MCF 10A (cell line): ENCODE measurements at regions of chr22 and their contacts with region 1.

Region 1: DNA sequence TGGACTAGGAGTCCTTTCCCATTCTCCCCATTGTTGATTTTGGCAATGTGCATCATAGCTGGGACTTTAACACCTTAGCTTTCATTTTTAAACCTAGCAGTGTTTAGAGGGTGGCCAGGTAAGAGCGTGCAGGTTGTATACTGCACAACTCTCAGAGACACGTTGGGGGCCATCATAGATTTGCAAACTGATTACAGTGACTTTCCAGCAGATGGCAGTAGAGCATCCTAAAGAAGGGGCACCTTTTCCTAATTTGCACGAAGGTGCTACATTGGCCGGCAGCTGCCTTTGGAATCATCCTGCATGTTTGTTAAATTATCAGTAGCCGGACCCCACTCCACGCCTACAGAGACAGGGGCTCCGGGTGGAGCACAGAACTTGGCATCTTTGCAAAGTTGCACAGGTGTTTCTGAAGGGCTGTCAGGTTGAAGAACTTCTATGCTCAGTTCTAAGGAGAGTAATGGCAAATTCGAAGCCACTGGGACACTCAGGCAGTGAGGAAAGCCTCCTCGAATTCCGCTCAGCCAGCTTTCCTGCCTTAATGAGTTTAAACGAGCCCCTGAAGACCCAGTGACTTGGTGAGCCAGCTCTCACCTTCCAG is 7.7 kb downstream of the LHFPL7 start:
- DNase-seq: peak; percentile 73
- H3K4me3 Mint-ChIP-seq: no peak overlapping the region
- H3K27ac Mint-ChIP-seq: no peak overlapping the region
- H3K4me1 Mint-ChIP-seq: peaks cover 6% of the 10 kb centered on the region
- H3K27me3 Mint-ChIP-seq: no peaks in the 10 kb centered on the region
- CTCF ChIP-seq: peak; percentile 82

Region 2: DNA sequence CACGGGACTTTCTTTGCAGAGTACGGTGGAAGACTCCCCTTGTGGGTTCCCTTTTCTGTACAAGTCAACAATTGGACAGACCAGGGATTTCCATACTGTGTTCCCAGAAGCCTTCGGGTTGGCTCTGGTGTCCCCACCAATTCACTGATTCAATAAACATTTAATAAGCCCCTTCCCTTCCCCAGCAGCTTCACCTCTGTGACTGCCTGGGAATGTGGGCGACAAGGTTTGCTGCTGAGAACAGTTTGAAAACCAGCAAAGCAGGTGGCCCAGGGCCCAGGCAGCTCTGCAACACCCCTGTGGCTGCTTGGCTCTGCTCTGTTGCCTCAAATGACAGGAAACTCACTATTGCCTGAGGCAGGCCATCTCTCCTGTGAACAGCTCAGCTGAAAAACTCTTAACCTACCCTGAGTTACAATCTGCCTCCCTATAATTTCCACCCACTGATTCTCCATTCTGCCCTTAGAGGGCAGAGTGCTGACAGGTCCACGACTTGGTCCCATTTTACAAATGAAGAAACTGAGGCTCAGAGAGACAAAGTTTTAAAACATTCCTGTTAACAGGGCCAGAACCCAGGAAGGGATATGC is 501.0 kb before region 1 on chr22:
- CTCF ChIA-PET with region 1: no interaction called
- POLR2A ChIA-PET with region 1: no interaction called
- intact Hi-C with region 1: no loop called
- DNase-seq: peak; percentile 20
- H3K4me3 Mint-ChIP-seq: no peak overlapping the region
- H3K27ac Mint-ChIP-seq: no peak overlapping the region
- H3K4me1 Mint-ChIP-seq: no peaks in the 10 kb centered on the region
- H3K27me3 Mint-ChIP-seq: no peaks in the 10 kb centered on the region
- CTCF ChIP-seq: peak; percentile 16

Region 3: GRCh38 chr22:24926849-24927579 is 11.8 kb before region 1 on chr22:
- CTCF ChIA-PET with region 1: interaction called, 19 read pairs
- POLR2A ChIA-PET with region 1: no interaction called
- intact Hi-C with region 1: no loop called
- DNase-seq: peak; percentile 76
- H3K4me3 Mint-ChIP-seq: no peak overlapping the region
- H3K27ac Mint-ChIP-seq: no peak overlapping the region
- H3K4me1 Mint-ChIP-seq: peaks cover 6% of the 10 kb centered on the region
- H3K27me3 Mint-ChIP-seq: peaks cover 33% of the 10 kb centered on the region
- CTCF ChIP-seq: no peak

Region 4: GRCh38 chr22:25002241-25002985 is 63.6 kb after region 1 on chr22:
- CTCF ChIA-PET with region 1: no interaction called
- POLR2A ChIA-PET with region 1: no interaction called
- intact Hi-C with region 1: no loop called
- DNase-seq: no peak
- H3K4me3 Mint-ChIP-seq: no peak overlapping the region
- H3K27ac Mint-ChIP-seq: no peak overlapping the region
- H3K4me1 Mint-ChIP-seq: peaks cover 17% of the 10 kb centered on the region
- H3K27me3 Mint-ChIP-seq: no peaks in the 10 kb centered on the region
- CTCF ChIP-seq: no peak

Region 5: GRCh38 chr22:25027959-25028840 is 89.4 kb after region 1 on chr22:
- CTCF ChIA-PET with region 1: interaction called, 13 read pairs
- POLR2A ChIA-PET with region 1: no interaction called
- intact Hi-C with region 1: no loop called
- DNase-seq: no peak
- H3K4me3 Mint-ChIP-seq: no peak overlapping the region
- H3K27ac Mint-ChIP-seq: peak overlapping the region; percentile 79
- H3K4me1 Mint-ChIP-seq: peaks cover 28% of the 10 kb centered on the region
- H3K27me3 Mint-ChIP-seq: no peaks in the 10 kb centered on the region
- CTCF ChIP-seq: peak; percentile 28

Region 6: DNA sequence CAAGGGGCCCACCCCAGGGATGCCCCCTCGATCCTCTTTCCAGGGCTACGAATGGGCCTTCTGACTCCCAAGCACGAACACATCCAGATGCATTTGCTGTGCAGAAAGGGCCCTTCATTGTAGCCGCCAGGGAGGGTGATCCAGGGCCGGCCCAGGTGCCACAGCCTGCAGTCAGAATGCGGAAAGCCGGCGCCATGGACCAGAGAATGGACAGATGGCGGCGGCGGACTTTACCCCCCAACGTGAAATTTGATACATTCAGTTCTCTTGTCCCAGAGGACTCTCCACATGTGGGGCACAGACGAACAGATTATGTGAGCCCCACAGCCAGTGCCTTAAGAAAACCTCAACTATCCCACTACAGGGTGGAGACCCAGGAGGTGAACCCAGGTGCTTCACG is 100.9 kb after region 1 on chr22:
- CTCF ChIA-PET with region 1: interaction called, 10 read pairs
- POLR2A ChIA-PET with region 1: no interaction called
- intact Hi-C with region 1: no loop called
- DNase-seq: no peak
- H3K4me3 Mint-ChIP-seq: no peak overlapping the region
- H3K27ac Mint-ChIP-seq: no peak overlapping the region
- H3K4me1 Mint-ChIP-seq: no peaks in the 10 kb centered on the region
- H3K27me3 Mint-ChIP-seq: no peaks in the 10 kb centered on the region
- CTCF ChIP-seq: no peak

Region 7: DNA sequence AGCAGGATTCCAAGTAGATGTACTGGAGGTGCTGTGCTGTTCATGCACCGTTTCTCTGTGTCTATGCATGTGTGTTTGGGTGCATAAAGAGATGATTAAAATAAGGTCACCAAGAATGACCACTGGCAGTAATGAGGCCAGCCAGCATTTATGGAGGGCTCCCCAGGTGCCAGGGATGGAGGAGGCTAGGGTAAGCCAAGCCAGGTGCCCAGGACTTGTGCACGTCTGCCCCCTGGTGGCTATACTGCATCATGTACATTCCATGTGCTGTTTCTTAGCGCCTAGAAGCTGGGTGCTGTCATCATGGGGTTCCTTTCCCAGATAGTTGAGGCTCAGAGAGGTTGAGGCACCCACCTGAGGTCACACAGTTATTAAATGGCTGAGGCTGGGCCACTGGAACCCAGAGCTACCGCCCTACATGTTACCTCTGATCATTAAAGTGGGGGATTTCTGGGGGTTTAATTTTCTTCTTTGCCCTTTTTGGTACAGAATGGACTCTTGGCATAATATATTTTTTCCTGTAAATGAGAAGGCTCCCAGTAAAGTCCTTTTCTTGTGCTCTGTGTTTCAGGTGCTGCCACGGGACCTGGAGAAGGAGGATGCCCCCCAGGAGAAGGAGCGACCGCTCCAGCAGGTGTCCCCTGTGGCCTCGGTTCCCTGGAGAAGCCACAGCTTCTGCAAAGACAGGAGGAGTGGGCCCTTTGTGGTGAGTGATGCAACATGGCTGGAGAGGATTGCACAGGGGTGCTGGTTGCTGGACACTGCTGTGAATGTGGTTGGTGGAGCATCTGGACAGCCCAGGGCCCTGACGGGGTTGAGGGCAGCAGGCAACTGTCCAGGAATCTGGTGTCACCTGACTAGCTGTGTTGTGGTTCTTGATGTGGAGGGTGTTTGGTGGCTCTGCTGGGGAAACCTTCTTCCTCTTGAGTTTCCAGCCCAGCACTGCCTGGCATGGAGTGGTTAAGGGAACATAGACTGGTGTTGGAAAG is 110.1 kb after region 1 on chr22:
- CTCF ChIA-PET with region 1: interaction called, 56 read pairs
- POLR2A ChIA-PET with region 1: no interaction called
- intact Hi-C with region 1: loop called (anchors 1 kb)
- DNase-seq: peak; percentile 80
- H3K4me3 Mint-ChIP-seq: no peak overlapping the region
- H3K27ac Mint-ChIP-seq: no peak overlapping the region
- H3K4me1 Mint-ChIP-seq: peaks cover 7% of the 10 kb centered on the region
- H3K27me3 Mint-ChIP-seq: no peaks in the 10 kb centered on the region
- CTCF ChIP-seq: peak; percentile 96

Region 8: DNA sequence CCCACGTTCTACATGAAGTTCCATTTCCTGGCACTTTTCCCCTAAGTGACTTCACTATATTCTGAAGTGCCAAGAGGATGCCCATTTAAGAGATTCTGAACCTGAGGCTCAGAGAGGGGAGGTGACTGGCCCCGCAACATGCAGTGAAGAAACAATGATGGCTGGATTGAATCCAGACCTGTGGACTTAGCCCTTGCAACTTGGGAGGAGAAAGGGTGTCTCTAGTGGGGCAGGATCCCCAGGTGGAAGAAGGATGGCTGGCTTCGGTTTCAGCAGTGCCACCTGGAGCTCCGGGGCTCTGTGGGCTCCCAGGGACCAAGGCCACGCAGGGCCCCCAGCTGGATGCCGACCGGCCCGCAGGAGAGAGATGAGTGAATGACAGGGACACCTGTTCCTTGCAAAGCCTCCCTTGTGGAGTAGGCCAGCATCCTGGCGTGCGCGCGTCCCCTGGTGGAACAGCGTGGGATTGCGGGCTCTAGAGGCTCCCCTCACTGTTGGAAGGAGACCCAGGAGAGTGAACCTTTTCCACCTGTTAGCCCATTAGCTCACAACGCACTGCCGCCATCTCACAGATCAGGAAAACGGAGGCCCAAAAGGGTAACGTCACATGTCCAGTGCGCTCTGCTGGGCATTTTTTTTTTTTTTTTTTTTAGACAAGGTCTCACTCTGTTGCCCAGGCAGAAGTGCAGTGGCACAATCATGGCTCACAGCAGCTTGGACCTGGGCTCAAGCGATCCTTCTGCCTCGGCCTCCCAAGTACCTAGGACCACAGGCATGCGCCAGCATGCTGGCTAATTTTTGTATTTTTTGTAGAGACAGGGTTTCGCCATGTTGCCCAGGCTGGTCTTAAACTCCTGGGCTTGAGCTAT is 118.4 kb after region 1 on chr22:
- CTCF ChIA-PET with region 1: interaction called, 34 read pairs
- POLR2A ChIA-PET with region 1: no interaction called
- intact Hi-C with region 1: loop called (anchors 1 kb)
- DNase-seq: peak; percentile 65
- H3K4me3 Mint-ChIP-seq: no peak overlapping the region
- H3K27ac Mint-ChIP-seq: no peak overlapping the region
- H3K4me1 Mint-ChIP-seq: peaks cover 8% of the 10 kb centered on the region
- H3K27me3 Mint-ChIP-seq: no peaks in the 10 kb centered on the region
- CTCF ChIP-seq: peak; percentile 82

Region 9: GRCh38 chr22:25172153-25172552 is 233.3 kb after region 1 on chr22:
- CTCF ChIA-PET with region 1: interaction called, 6 read pairs
- POLR2A ChIA-PET with region 1: no interaction called
- intact Hi-C with region 1: loop called (anchors 2 kb)
- DNase-seq: peak; percentile 39
- H3K4me3 Mint-ChIP-seq: no peak overlapping the region
- H3K27ac Mint-ChIP-seq: peak overlapping the region; percentile 61
- H3K4me1 Mint-ChIP-seq: peaks cover 31% of the 10 kb centered on the region
- H3K27me3 Mint-ChIP-seq: no peaks in the 10 kb centered on the region
- CTCF ChIP-seq: no peak